K562 (cell line): ENCODE measurements at regions of chr1 and their contacts with region 1.

Region 1: DNA sequence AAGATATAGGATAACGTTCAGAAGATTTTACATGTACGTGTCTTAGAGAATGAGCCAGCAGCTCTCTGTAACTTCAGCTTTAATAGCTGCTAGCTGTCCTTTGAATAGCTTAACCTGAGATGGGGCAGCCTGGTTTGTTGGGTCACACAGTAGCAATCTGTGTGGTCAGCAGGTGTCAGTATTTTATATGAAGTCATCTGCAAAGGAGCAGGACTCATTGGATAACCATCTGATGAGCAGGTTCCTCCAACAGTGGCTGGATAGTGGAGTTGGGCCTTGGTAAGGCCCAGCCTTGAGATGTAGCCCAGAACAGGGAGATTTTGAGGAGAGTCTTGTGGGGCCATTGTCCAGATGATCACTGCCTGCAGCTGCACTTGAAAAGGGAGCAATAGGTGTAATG is 6.4 kb downstream of the GSTM5 start:
- DNase-seq: peak; percentile 44 to 53 (median 48)
- ATAC-seq: peak; percentile 73
- H3K4me3 ChIP-seq: no peak overlapping the region
- H3K27ac ChIP-seq: peak overlapping the region; percentile 43; the same call in 2 of the 3 replicates
- H3K4me1 ChIP-seq: peaks cover 5 to 21% of the 10 kb centered on the region in 2 experiments; a peak in 4 of 5 replicates
- H3K27me3 ChIP-seq: peaks cover 0 to 6% of the 10 kb centered on the region in 2 experiments; a peak in 2 of 5 replicates
- CTCF ChIP-seq: peak; percentile 28 to 73 (median 43)
- EP300 ChIP-seq: no peak
- POLR2A ChIP-seq: no peak
- RAD21 ChIP-seq: peak; percentile 70 to 82

Region 2: GRCh38 chr1:109677459-109677858 is 41.0 kb before region 1 on chr1:
- CTCF ChIA-PET with region 1: no interaction called
- POLR2A ChIA-PET with region 1: no interaction called
- in situ Hi-C with region 1: loop called (anchors 5 kb)
- intact Hi-C with region 1: no loop called
- DNase-seq: peak in 3 of 4 experiments; percentile 0 to 1 (median 0)
- ATAC-seq: no peak
- H3K4me3 ChIP-seq: no peak overlapping the region
- H3K27ac ChIP-seq: no peak overlapping the region
- H3K4me1 ChIP-seq: no peaks in the 10 kb centered on the region
- H3K27me3 ChIP-seq: peaks cover 0 to 2% of the 10 kb centered on the region in 2 experiments; a peak in 1 of 5 replicates
- CTCF ChIP-seq: no peak
- EP300 ChIP-seq: no peak
- POLR2A ChIP-seq: no peak
- RAD21 ChIP-seq: no peak